ENCODE measurements at regions of chr16 and their contacts with region 1.

Region 1: GRCh38 chr16:68275611-68276191 is 11.4 kb downstream of the SLC7A6 start:
- DNase-seq: peak; percentile 71
- H3K4me3 Mint-ChIP-seq: no peak overlapping the region
- H3K27ac Mint-ChIP-seq: peak overlapping the region; percentile 77
- H3K4me1 Mint-ChIP-seq: peaks cover 20% of the 10 kb centered on the region
- H3K27me3 Mint-ChIP-seq: no peaks in the 10 kb centered on the region
- CTCF ChIP-seq: no peak

Region 2: GRCh38 chr16:68049449-68049848 is 226.3 kb before region 1 on chr16:
- CTCF ChIA-PET with region 1: no interaction called
- POLR2A ChIA-PET with region 1: no interaction called
- intact Hi-C with region 1: no loop called
- DNase-seq: no peak
- H3K4me3 Mint-ChIP-seq: no peak overlapping the region
- H3K27ac Mint-ChIP-seq: no peak overlapping the region
- H3K4me1 Mint-ChIP-seq: no peaks in the 10 kb centered on the region
- H3K27me3 Mint-ChIP-seq: no peaks in the 10 kb centered on the region
- CTCF ChIP-seq: no peak

Region 3: DNA sequence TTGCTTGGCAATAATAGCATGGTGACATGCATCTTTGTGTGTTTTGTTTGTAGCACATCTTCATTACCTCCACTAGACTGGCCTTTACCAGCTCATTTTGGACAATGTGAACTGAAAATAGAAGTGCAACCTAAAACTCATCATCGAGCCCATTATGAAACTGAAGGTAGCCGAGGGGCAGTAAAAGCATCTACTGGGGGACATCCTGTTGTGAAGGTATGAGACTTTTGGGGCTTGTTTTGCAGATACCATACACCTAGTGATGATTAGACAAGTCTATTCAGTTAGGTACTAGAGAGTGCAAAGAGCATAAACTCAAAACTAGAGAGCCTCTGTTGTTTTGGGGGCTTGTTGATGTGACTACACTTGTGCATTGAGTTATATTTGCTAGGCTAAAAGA is 149.3 kb before region 1 on chr16:
- CTCF ChIA-PET with region 1: no interaction called
- POLR2A ChIA-PET with region 1: no interaction called
- intact Hi-C with region 1: no loop called
- DNase-seq: no peak
- H3K4me3 Mint-ChIP-seq: no peak overlapping the region
- H3K27ac Mint-ChIP-seq: no peak overlapping the region
- H3K4me1 Mint-ChIP-seq: peaks cover 20% of the 10 kb centered on the region
- H3K27me3 Mint-ChIP-seq: no peaks in the 10 kb centered on the region
- CTCF ChIP-seq: no peak

Region 4: DNA sequence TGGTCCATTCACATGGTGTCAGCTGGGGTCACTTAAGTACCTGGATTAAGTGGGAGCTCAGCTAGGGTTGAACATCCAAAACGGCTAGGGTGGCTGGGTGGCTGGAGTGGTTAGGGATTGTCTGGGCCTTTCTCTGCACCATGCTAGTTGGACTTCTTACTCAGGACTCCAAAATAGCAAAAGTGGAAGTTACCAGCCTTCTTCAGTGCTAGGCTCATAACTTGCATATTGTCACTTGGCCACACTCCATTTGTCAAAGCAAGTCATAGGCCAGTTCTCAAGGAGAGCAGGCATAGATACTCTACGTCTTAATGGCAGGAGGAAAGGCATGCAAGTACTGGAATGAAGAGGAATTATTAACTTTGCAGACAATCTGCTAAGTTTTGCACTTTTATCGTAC is 109.4 kb before region 1 on chr16:
- CTCF ChIA-PET with region 1: no interaction called
- POLR2A ChIA-PET with region 1: no interaction called
- intact Hi-C with region 1: no loop called
- DNase-seq: no peak
- H3K4me3 Mint-ChIP-seq: no peak overlapping the region
- H3K27ac Mint-ChIP-seq: no peak overlapping the region
- H3K4me1 Mint-ChIP-seq: no peaks in the 10 kb centered on the region
- H3K27me3 Mint-ChIP-seq: no peaks in the 10 kb centered on the region
- CTCF ChIP-seq: no peak

Region 5: GRCh38 chr16:68229431-68230198 is 46.1 kb before region 1 on chr16:
- CTCF ChIA-PET with region 1: no interaction called
- POLR2A ChIA-PET with region 1: no interaction called
- intact Hi-C with region 1: no loop called
- DNase-seq: peak; percentile 72
- H3K4me3 Mint-ChIP-seq: no peak overlapping the region
- H3K27ac Mint-ChIP-seq: no peak overlapping the region
- H3K4me1 Mint-ChIP-seq: peaks cover 13% of the 10 kb centered on the region
- H3K27me3 Mint-ChIP-seq: no peaks in the 10 kb centered on the region
- CTCF ChIP-seq: peak; percentile 87

Region 6: GRCh38 chr16:68289621-68290329 is 14.1 kb after region 1 on chr16:
- CTCF ChIA-PET with region 1: interaction called, 7 read pairs
- POLR2A ChIA-PET with region 1: interaction called, 17 read pairs
- intact Hi-C with region 1: no loop called
- DNase-seq: no peak
- H3K4me3 Mint-ChIP-seq: no peak overlapping the region
- H3K27ac Mint-ChIP-seq: no peak overlapping the region
- H3K4me1 Mint-ChIP-seq: peaks cover 23% of the 10 kb centered on the region
- H3K27me3 Mint-ChIP-seq: no peaks in the 10 kb centered on the region
- CTCF ChIP-seq: no peak

Region 7: DNA sequence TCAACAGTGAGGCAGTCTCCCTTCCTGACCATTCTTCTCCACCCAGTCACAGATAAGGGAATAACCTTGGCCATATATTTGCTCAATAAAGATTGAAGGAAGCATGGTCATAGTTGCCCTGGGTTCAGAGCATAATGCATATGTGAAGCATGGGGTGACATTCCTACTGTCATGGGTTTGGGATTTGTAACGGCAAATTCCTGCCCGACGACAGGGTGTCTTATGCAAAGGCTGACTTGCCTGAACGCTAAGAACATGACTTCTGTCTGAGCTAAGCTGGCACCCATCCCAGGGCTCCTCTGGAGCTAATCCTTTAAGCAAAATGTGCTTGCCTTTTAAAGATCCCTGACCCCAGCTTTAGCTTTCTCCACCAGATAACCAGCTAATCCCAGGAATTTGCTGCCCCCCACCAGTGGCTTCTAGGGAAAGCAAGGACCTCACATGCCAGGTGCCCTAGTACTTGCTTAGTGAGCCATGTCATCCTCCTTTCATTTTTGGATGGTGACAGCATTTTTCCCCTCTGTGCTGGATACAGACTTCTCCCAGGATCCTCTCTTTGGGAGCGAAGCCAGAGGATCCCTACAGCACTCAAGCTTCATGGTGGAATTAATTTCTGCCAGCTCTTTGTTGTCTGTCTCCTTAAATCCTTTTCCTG is 23.3 kb after region 1 on chr16:
- CTCF ChIA-PET with region 1: interaction called, 5 read pairs
- POLR2A ChIA-PET with region 1: interaction called, 15 read pairs
- intact Hi-C with region 1: no loop called
- DNase-seq: peak; percentile 50
- H3K4me3 Mint-ChIP-seq: no peak overlapping the region
- H3K27ac Mint-ChIP-seq: peak overlapping the region; percentile 39
- H3K4me1 Mint-ChIP-seq: no peaks in the 10 kb centered on the region
- H3K27me3 Mint-ChIP-seq: no peaks in the 10 kb centered on the region
- CTCF ChIP-seq: no peak

Measured in MCF 10A (cell line).